ENCODE measurements at regions of chr22 and their contacts with region 1.

Region 1: GRCh38 chr22:50030297-50031188 is 18.0 kb upstream of the IL17REL start:
- DNase-seq: peak; percentile 86
- ATAC-seq: peak; percentile 93

Region 2: GRCh38 chr22:49929208-49930136 is 101.1 kb before region 1 on chr22:
- intact Hi-C with region 1: loop called (anchors 10 kb)
- DNase-seq: peak; percentile 82
- ATAC-seq: peak; percentile 50

Region 3: DNA sequence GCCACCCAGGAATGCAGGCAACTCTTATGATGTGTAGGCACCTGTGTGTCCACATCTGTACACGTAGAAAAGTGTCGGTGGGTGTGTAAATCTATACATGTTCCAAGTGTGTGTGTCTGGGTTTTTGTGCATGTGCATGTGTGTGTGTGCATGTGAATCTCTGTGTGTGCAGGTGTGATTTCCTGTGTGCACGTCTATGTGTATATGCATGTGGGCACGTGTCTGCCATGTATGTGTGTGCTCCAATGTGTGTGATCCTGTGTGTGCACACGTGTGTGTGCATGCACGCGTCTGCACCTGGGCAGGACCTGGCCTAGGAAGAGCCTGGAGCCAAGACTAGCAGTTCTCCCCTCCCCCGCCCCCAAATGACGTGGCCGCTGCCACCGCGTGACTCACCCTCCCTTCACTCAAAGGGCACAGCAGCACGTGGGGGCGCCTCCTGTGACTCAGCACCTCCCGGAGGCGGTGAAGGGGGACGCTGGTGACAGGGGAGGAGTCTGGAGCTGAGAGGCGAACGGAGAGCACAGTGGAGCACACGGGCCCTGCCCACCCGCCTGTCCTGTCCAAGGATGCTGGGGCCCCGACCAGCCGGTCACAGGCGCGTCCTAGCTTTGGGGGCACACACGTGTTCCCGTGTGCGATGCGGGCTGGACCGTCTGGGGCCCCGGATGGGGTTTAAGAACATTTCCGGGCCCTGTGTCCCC is 59.9 kb before region 1 on chr22:
- intact Hi-C with region 1: no loop called
- DNase-seq: peak; percentile 94
- ATAC-seq: peak; percentile 89